WTC11 (cell line): ENCODE measurements at regions of chr11 and their contacts with region 1.

Region 1: DNA sequence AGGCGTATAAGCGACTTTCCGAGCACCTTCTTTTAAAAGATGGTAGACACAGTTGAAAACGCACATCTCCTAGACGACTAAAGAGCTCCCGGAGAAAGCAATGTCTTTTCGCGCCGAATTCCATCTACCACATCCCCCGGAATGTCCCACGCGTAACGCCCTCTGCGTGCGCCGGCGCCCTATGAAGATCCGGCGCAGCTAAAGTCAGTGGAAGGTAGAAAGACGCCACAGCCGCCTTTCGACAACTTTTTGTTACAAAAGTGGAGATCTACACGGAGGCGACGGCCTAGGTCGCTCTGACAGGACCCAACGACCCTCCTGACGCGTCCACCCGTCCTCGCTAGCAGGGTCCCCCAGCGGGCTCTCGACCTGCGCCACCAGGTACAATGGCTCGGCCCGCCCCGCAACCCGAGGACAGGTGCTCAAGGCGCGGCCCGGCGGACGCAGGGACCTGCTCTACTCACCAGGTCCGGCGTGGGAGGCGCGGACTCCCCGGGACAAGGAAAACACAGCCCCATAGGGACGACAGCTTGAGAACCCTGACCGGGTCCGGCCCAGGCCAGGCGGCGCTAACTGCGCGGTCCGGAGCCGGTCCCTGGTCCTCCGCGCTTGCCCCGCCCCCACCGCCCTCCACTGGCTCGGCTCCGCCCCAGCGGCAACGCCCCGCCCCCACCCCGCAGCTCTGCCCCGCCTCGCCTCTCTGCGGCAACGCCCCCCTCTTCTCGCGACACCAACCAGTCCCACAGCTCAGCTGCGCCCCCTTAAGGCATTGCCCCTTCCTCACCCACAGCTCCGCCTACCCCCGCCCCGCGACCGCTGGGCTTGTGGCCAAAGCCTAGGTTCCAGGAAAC is at the start of gene SVIP:
- DNase-seq: peak; percentile 98
- ATAC-seq: peak; percentile 97
- H3K4me3 Mint-ChIP-seq: peak within 1 kb of the TSS; percentile 85
- H3K27ac Mint-ChIP-seq: no peak within 1 kb of the TSS
- H3K4me1 Mint-ChIP-seq: peaks cover 26% of the 10 kb centered on the region
- H3K27me3 Mint-ChIP-seq: peaks cover 15% of the 10 kb centered on the region
- CTCF ChIP-seq: peak; percentile 48; the same call in 1 of the 2 replicates
- total RNA-seq, gene SVIP: 8.1 to 10.9 TPM (median 9.1 TPM) in 3 replicates

Region 2: GRCh38 chr11:22690871-22691270 is 138.6 kb before region 1 on chr11:
- CTCF ChIA-PET with region 1: no interaction called
- POLR2A ChIA-PET with region 1: no interaction called
- DNase-seq: no peak
- ATAC-seq: no peak
- H3K4me3 Mint-ChIP-seq: no peak overlapping the region
- H3K27ac Mint-ChIP-seq: no peak overlapping the region
- H3K4me1 Mint-ChIP-seq: peaks cover 6% of the 10 kb centered on the region
- H3K27me3 Mint-ChIP-seq: no peaks in the 10 kb centered on the region
- CTCF ChIP-seq: no peak

Region 3: DNA sequence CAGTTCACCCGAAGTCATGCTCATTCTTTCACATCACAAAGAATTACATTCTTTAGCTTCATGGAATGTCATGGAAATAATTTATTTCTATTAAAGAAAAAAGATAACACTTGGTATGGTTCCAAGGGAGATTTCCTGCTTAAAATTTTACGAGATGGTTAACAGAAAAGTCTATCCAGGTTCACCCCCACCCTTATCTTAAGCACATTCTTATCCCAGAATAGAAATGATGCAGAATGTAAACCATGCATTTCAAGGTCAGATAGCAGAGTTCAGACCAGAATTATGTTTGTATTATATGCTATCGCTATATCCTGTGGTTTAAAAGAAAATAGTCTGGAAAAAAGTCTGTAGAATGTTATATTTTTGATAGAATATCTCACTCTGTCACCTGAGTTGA is 104.4 kb before region 1 on chr11:
- CTCF ChIA-PET with region 1: no interaction called
- POLR2A ChIA-PET with region 1: no interaction called
- DNase-seq: no peak
- ATAC-seq: no peak
- H3K4me3 Mint-ChIP-seq: no peak overlapping the region
- H3K27ac Mint-ChIP-seq: no peak overlapping the region
- H3K4me1 Mint-ChIP-seq: no peaks in the 10 kb centered on the region
- H3K27me3 Mint-ChIP-seq: no peaks in the 10 kb centered on the region
- CTCF ChIP-seq: no peak

Region 4: GRCh38 chr11:22787551-22788162 is 41.8 kb before region 1 on chr11:
- CTCF ChIA-PET with region 1: interaction called, 13 read pairs
- POLR2A ChIA-PET with region 1: no interaction called
- DNase-seq: no peak
- ATAC-seq: peak; percentile 69
- H3K4me3 Mint-ChIP-seq: no peak overlapping the region
- H3K27ac Mint-ChIP-seq: no peak overlapping the region
- H3K4me1 Mint-ChIP-seq: peaks cover 10% of the 10 kb centered on the region
- H3K27me3 Mint-ChIP-seq: no peaks in the 10 kb centered on the region
- CTCF ChIP-seq: 0 out of 2 replicates have a peak, but pooled peaks have one; percentile 24

Region 5: DNA sequence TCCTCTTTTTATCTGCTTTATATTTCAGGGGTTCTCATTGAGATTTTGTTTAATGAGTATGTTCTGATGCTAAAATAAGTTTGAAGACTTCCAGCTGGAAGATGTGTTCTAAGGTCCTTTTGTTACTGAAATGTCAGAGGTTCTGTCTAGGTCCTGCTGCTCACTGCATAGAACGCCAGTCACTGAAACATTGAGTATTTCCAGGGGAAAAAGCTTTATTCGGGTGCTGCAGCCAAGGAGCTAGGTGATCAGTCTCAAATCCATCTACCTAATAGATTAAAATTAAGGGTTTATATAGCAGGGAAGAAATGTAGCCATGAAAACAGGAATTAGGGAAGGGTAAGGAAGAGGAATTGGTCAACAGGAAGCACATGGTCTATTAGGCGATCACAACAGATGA is 19.6 kb before region 1 on chr11:
- CTCF ChIA-PET with region 1: interaction called, 12 read pairs
- POLR2A ChIA-PET with region 1: no interaction called
- DNase-seq: no peak
- ATAC-seq: no peak
- H3K4me3 Mint-ChIP-seq: no peak overlapping the region
- H3K27ac Mint-ChIP-seq: no peak overlapping the region
- H3K4me1 Mint-ChIP-seq: peaks cover 8% of the 10 kb centered on the region
- H3K27me3 Mint-ChIP-seq: no peaks in the 10 kb centered on the region
- CTCF ChIP-seq: no peak

Region 6: GRCh38 chr11:22851477-22851876 is 22.0 kb after region 1 on chr11:
- CTCF ChIA-PET with region 1: interaction called, 11 read pairs
- POLR2A ChIA-PET with region 1: no interaction called
- DNase-seq: no peak
- ATAC-seq: no peak
- H3K4me3 Mint-ChIP-seq: no peak overlapping the region
- H3K27ac Mint-ChIP-seq: no peak overlapping the region
- H3K4me1 Mint-ChIP-seq: no peaks in the 10 kb centered on the region
- H3K27me3 Mint-ChIP-seq: no peaks in the 10 kb centered on the region; the same call in 1 of the 2 replicates
- CTCF ChIP-seq: no peak